ENCODE measurements at regions of chr16 and their contacts with region 1.

Region 1: DNA sequence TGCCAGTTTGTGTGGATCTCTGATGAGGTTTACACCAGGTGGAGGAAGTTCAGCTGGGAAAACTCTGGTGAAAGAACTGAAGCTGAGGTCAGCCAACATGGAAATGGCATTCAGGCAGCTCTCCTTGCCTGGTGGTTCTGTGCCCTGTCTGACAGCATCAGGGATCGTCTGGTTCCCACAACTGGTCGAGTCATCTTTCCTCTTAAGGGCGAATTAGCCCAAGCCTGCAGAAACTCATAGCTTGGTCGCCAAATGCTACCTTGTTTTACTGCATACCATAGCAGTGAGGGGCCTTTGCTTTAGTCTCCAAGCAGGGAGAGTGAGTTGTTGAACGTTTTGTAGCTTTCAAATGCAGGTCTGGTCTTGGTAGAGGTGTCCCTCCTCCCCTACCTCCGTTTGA is 7.2 kb downstream of the PLCG2 start:
- DNase-seq: peak; percentile 50
- H3K4me3 ChIP-seq: peak overlapping the region; percentile 76
- H3K27ac ChIP-seq: peak overlapping the region; percentile 92
- H3K4me1 ChIP-seq: peaks cover 86% of the 10 kb centered on the region
- CTCF ChIP-seq: no peak

Region 2: GRCh38 chr16:81703177-81704155 is 82.9 kb before region 1 on chr16:
- CTCF ChIA-PET with region 1: no interaction called
- POLR2A ChIA-PET with region 1: no interaction called
- intact Hi-C with region 1: no loop called
- DNase-seq: no peak
- H3K4me3 ChIP-seq: no peak overlapping the region
- H3K27ac ChIP-seq: no peak overlapping the region
- H3K4me1 ChIP-seq: peaks cover 6% of the 10 kb centered on the region
- CTCF ChIP-seq: no peak

Region 3: DNA sequence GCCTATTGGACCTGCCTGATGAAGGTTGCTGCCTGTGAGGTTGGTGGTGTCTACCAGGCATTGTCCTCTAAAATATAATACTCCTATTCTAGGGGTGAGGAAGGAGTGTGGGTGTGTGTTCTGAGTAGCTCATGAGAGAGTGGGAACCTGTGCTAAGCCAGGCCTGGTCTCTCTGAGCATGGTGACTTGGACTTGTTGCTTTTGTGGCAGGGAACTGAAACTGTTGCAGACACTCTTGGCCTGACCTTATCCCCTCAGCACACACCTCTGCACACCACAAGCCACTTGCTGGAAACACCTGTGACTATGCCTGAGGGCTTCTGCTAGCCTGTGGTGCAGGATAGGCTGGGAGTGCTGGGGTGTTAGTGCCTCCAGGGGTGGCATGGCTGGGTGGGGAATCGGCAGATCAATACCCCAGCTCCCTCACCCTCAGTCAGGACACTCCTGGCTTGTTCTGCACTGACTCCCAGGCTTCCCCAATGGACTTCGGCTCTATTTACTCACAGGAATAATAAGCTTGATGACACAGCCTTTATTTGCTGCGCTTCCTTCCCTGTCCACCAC is 22.7 kb after region 1 on chr16:
- CTCF ChIA-PET with region 1: no interaction called
- POLR2A ChIA-PET with region 1: interaction called, 26 read pairs
- intact Hi-C with region 1: no loop called
- DNase-seq: peak; percentile 95
- H3K4me3 ChIP-seq: peak overlapping the region; percentile 50
- H3K27ac ChIP-seq: peak overlapping the region; percentile 95
- H3K4me1 ChIP-seq: peaks cover 92% of the 10 kb centered on the region
- CTCF ChIP-seq: no peak

Region 4: DNA sequence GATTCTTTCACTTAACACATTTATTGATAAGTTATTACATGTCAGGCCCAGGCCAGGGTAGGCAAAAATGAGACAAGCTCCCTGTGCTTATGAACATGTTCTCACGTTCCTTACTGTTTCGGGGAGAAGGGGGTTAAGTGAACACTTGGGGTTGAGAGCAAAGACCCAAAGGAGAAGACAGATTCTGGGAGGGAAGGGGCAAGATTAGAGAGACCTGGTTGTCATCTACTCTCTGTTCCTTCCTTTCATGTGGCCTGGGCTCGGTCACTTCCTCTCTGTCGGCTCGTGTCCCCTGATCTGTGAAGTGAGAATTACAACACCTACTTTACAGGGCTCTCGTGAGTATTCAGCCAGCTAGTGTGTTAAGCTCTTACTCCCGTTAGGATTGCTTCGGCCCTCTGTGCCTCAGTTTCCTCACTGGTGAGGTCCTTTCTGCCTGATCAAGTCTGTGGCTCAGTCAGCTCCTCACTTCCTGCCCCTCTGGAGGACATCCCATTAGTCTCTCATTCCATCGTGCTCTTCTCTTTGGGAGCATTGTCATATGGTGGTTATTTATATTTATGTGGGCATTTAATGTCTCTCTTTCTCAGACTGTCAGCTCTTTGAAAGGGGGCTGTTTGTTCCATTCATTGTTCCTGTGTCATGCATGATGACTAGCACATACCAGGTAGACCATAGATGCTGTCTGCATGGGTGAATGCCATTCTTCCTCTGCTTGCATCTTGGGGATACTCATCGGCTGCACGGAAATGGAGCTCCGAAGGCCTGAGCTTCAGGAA is 31.7 kb after region 1 on chr16:
- CTCF ChIA-PET with region 1: no interaction called
- POLR2A ChIA-PET with region 1: interaction called, 57 read pairs
- intact Hi-C with region 1: loop called (anchors 2 kb)
- DNase-seq: peak; percentile 88
- H3K4me3 ChIP-seq: peak overlapping the region; percentile 64
- H3K27ac ChIP-seq: peak overlapping the region; percentile 97
- H3K4me1 ChIP-seq: peaks cover 95% of the 10 kb centered on the region
- CTCF ChIP-seq: no peak

Region 5: GRCh38 chr16:81873843-81874752 is 87.8 kb after region 1 on chr16:
- CTCF ChIA-PET with region 1: interaction called, 3 read pairs
- POLR2A ChIA-PET with region 1: interaction called, 3 read pairs
- intact Hi-C with region 1: loop called (anchors 2 kb)
- DNase-seq: peak; percentile 81
- H3K4me3 ChIP-seq: no peak overlapping the region
- H3K27ac ChIP-seq: peak overlapping the region; percentile 47
- H3K4me1 ChIP-seq: peaks cover 44% of the 10 kb centered on the region
- CTCF ChIP-seq: peak; percentile 98

Region 6: DNA sequence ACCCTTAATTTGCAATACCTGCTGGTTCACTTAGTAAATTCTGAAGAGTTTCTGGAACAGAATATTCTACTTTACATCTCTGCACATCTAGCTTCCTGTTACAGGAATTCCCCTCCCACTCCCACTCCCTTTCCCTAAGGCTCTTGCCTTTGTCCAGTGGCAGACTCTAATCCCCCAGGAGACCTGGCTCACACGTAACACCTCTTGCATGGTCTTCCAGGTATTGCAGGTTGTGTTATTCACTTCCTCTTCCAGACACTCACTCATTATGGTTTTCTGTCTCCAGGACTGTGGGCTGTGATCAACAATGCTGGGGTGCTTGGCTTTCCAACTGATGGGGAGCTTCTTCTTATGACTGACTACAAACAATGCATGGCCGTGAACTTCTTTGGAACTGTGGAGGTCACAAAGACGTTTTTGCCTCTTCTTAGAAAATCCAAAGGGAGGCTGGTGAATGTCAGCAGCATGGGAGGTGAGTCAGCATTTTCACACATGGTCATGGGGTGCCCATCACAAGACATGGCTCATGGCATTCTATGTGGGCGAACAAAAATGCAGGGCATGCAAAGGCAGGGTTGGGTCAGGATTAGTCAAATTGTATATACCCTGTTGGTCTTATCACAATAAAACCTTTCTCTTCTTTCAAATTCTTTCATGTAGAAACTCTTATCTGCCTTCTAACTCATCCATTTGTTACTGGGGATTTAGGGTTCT is 284.5 kb after region 1 on chr16:
- CTCF ChIA-PET with region 1: no interaction called
- POLR2A ChIA-PET with region 1: no interaction called
- intact Hi-C with region 1: no loop called
- DNase-seq: no peak
- H3K4me3 ChIP-seq: no peak overlapping the region
- H3K27ac ChIP-seq: no peak overlapping the region
- H3K4me1 ChIP-seq: no peaks in the 10 kb centered on the region
- CTCF ChIP-seq: no peak

Region 7: GRCh38 chr16:82379551-82379950 is 593.2 kb after region 1 on chr16:
- CTCF ChIA-PET with region 1: no interaction called
- POLR2A ChIA-PET with region 1: no interaction called
- intact Hi-C with region 1: no loop called
- DNase-seq: no peak
- H3K4me3 ChIP-seq: no peak overlapping the region
- H3K27ac ChIP-seq: no peak overlapping the region
- H3K4me1 ChIP-seq: no peaks in the 10 kb centered on the region
- CTCF ChIP-seq: no peak

Measured in OCI-LY7 (cell line).